ENCODE measurements at regions of chr7 and their contacts with region 1.

Region 1: GRCh38 chr7:41437257-41438196 is 265.4 kb downstream of the INHBA start:
- DNase-seq: no peak
- ATAC-seq: peak; percentile 59
- H3K4me3 ChIP-seq: no peak overlapping the region
- H3K27ac ChIP-seq: no peak overlapping the region
- H3K4me1 ChIP-seq: peaks cover 0 to 3% of the 10 kb centered on the region in 2 donors
- H3K27me3 ChIP-seq: no peaks in the 10 kb centered on the region

Region 2: DNA sequence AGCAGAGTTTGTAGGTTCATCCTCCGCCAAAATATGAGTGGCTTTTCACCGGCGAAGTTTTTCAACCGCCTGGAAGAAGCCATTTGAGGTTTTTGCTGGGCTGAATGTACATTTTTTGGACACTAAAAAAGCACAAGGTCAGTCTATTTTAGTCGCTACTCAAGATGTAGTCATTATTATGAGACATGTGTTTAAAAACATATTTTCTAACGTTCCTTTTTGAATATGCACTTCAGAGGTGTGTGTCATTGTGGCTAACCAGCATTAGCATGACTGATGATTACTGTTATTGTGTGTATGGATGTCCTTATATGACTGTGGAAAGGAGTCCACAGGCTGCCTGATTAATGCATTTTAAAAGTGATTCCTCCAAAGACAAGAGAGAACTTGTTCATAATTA is 340.0 kb before region 1 on chr7:
- intact Hi-C with region 1: loop called in 1 of 2 experiments (anchors 10 kb)
- DNase-seq: no peak
- ATAC-seq: no peak
- H3K4me3 ChIP-seq: no peak overlapping the region
- H3K27ac ChIP-seq: no peak overlapping the region
- H3K4me1 ChIP-seq: peaks cover 0 to 2% of the 10 kb centered on the region in 2 donors
- H3K27me3 ChIP-seq: no peaks in the 10 kb centered on the region

Region 3: DNA sequence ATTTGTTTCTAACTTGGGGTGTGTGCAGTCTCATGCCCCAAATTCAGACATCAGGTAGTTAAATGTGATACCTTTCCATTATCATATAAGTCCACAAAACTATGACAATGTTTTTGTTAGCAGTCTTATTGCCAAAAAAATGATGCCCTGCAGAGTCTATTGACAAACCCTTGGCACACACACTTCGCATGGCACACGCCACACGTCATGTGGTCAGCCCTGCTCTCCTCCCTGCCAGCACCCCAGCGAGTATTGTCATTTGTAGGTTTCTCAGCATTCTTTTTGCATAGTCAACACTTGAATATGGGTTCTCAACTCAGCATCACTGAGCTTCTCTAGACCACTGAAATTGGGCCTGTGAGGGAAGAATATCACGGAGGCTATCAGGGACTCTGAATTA is 90.6 kb before region 1 on chr7:
- intact Hi-C with region 1: no loop called
- DNase-seq: no peak
- ATAC-seq: no peak
- H3K4me3 ChIP-seq: no peak overlapping the region
- H3K27ac ChIP-seq: no peak overlapping the region
- H3K4me1 ChIP-seq: no peaks in the 10 kb centered on the region
- H3K27me3 ChIP-seq: no peaks in the 10 kb centered on the region